ENCODE measurements at regions of chr7 and their contacts with region 1.

Region 1: GRCh38 chr7:54773472-54774399 is 14.7 kb upstream of the SEC61G start:
- DNase-seq: peak; percentile 91
- ATAC-seq: peak; percentile 89
- H3K4me3 ChIP-seq: peak overlapping the region; percentile 8 to 47
- H3K27ac ChIP-seq: peak overlapping the region; percentile 37; the same call in 1 of the 2 replicates
- H3K4me1 ChIP-seq: peaks cover 11 to 29% of the 10 kb centered on the region in 2 experiments
- H3K27me3 ChIP-seq: no peaks in the 10 kb centered on the region
- CTCF ChIP-seq: peak; percentile 79 to 93 (median 88)
- POLR2A ChIP-seq: no peak
- RAD21 ChIP-seq: peak; percentile 94

Region 2: GRCh38 chr7:54839538-54840213 is 65.9 kb after region 1 on chr7:
- CTCF ChIA-PET with region 1: interaction called, 10 read pairs
- POLR2A ChIA-PET with region 1: no interaction called
- RAD21 ChIA-PET with region 1: no interaction called
- intact Hi-C with region 1: loop called (anchors 1 kb)
- DNase-seq: peak; percentile 51
- ATAC-seq: peak; percentile 97
- H3K4me3 ChIP-seq: no peak overlapping the region
- H3K27ac ChIP-seq: no peak overlapping the region
- H3K4me1 ChIP-seq: peaks cover 6 to 32% of the 10 kb centered on the region in 2 experiments
- H3K27me3 ChIP-seq: no peaks in the 10 kb centered on the region
- CTCF ChIP-seq: peak; percentile 82 to 94 (median 92)
- POLR2A ChIP-seq: no peak
- RAD21 ChIP-seq: peak; percentile 97

Region 3: DNA sequence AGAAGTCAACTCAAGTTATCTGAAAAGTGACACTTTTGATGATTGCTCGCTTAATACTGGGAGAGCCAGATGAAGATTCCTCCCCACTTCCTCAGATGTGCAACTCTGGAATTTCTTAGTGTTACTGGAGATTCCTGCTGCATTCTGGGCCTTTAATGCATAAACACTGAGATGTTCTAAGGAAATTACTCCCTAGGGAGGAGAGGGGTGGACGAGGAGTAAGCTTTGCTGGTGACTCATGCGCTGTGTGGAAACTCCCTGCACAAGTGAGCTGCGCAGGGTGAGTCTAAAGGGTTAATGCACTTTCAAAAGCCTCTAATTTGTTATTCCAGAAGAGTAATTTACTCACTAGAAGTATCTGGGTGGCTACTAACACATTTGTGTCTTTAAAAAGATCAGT is 291.3 kb after region 1 on chr7:
- CTCF ChIA-PET with region 1: no interaction called
- POLR2A ChIA-PET with region 1: no interaction called
- RAD21 ChIA-PET with region 1: no interaction called
- intact Hi-C with region 1: loop called (anchors 5 kb)
- DNase-seq: peak; percentile 83
- ATAC-seq: peak; percentile 83
- H3K4me3 ChIP-seq: peak overlapping the region; percentile 8 to 43
- H3K27ac ChIP-seq: peak overlapping the region; percentile 70
- H3K4me1 ChIP-seq: peaks cover 33 to 80% of the 10 kb centered on the region in 2 experiments
- H3K27me3 ChIP-seq: no peaks in the 10 kb centered on the region
- CTCF ChIP-seq: no peak
- POLR2A ChIP-seq: no peak
- RAD21 ChIP-seq: no peak

Region 4: GRCh38 chr7:55271069-55271626 is 497.4 kb after region 1 on chr7:
- CTCF ChIA-PET with region 1: interaction called, 10 read pairs
- POLR2A ChIA-PET with region 1: no interaction called
- RAD21 ChIA-PET with region 1: no interaction called
- intact Hi-C with region 1: loop called (anchors 1 kb)
- DNase-seq: no peak
- ATAC-seq: peak; percentile 71
- H3K4me3 ChIP-seq: no peak overlapping the region
- H3K27ac ChIP-seq: no peak overlapping the region
- H3K4me1 ChIP-seq: no peaks in the 10 kb centered on the region
- H3K27me3 ChIP-seq: no peaks in the 10 kb centered on the region
- CTCF ChIP-seq: peak; percentile 46 to 66 (median 63); a peak in 5 of 6 replicates
- POLR2A ChIP-seq: no peak
- RAD21 ChIP-seq: peak; percentile 70

Region 5: DNA sequence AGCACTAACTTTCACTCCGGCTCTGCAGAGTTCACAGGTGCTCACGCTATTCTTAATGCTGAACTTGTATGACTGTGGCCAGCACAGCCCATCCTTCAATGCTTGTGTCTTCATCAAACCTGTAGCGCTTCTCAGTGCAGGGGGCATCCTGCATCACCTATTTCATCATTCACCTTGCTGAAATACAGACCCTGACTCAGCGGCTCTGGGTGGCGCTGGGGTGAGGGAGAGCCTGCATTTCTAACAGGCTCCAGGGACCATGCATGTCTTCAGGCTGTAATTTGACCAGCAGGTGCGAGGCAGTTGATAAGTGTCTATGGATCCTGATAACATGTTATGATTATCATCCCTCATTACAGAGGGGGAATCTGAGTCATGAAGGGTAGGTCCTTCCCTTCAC is 709.3 kb after region 1 on chr7:
- CTCF ChIA-PET with region 1: no interaction called
- POLR2A ChIA-PET with region 1: no interaction called
- RAD21 ChIA-PET with region 1: no interaction called
- intact Hi-C with region 1: no loop called
- DNase-seq: no peak
- ATAC-seq: no peak
- H3K4me3 ChIP-seq: no peak overlapping the region
- H3K27ac ChIP-seq: no peak overlapping the region
- H3K4me1 ChIP-seq: no peaks in the 10 kb centered on the region
- H3K27me3 ChIP-seq: no peaks in the 10 kb centered on the region
- CTCF ChIP-seq: no peak
- POLR2A ChIP-seq: no peak
- RAD21 ChIP-seq: no peak

Region 6: DNA sequence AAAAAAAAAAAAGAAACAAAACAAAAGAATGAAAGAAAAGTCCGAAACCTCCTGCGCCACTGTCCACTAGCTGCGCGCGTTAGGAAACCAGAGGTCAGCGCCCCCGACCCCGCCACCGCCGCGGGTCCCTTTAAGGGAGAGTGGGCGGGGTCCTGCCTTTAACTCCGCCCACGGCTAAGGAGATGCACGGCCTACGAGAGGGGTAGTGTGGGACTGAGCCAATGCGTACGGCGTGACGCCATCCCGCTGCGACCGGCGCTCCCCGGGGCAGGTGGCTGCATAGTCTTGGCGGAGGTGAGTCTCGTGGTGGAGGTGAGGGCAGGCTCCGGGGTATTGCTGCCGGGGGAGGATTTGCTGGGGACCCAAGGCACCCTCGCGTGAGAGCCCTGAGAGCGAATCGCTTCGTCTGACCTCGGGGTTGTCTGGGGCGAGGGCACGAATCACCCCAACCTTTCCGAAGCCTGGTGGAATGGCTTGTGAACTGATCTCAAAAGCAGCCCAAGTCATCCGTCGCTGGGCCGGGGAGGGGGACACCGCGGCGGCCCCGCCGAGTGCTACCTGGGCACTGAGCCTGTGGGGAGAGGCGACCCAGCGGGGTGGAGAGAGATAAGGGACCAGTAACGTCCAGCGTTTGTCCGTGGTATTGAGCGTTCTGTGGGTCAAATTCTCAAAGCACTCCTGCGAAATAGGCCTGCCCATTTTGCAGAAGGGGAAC is 1178.1 kb after region 1 on chr7 and contains the start of gene MRPS17:
- CTCF ChIA-PET with region 1: no interaction called
- POLR2A ChIA-PET with region 1: no interaction called
- RAD21 ChIA-PET with region 1: no interaction called
- intact Hi-C with region 1: loop called (anchors 10 kb)
- DNase-seq: peak; percentile 85
- ATAC-seq: peak; percentile 100
- H3K4me3 ChIP-seq: peak within 1 kb of the TSS; percentile 99 to 100
- H3K27ac ChIP-seq: peak within 1 kb of the TSS; percentile 69
- H3K4me1 ChIP-seq: peaks cover 0 to 5% of the 10 kb centered on the region in 2 experiments; a peak in 1 of 4 replicates
- H3K27me3 ChIP-seq: no peaks in the 10 kb centered on the region
- CTCF ChIP-seq: no peak
- POLR2A ChIP-seq: peak; percentile 69
- RAD21 ChIP-seq: no peak
- total RNA-seq, gene MRPS17: 27.5 TPM

Measured in HCT116 (cell line).